ENCODE measurements at regions of chr19 and their contacts with region 1.

Region 1: GRCh38 chr19:6632002-6632621 is 37.8 kb downstream of the TNFSF14 start:
- DNase-seq: peak; percentile 29 to 88 (median 78)
- ATAC-seq: peak; percentile 90
- H3K4me3 ChIP-seq: no peak overlapping the region
- H3K4me3 Mint-ChIP-seq: no peak overlapping the region
- H3K27ac ChIP-seq: no peak overlapping the region
- H3K27ac Mint-ChIP-seq: peak overlapping the region in 3 of 9 donors; percentile 7 to 20 (median 13)
- H3K4me1 ChIP-seq: peaks cover 0 to 5% of the 10 kb centered on the region in 2 donors
- H3K4me1 Mint-ChIP-seq: peaks cover 4 to 20% (median 9%) of the 10 kb centered on the region in 7 donors
- H3K27me3 ChIP-seq: no peaks in the 10 kb centered on the region
- H3K27me3 Mint-ChIP-seq: peaks cover 4 to 7% (median 5%) of the 10 kb centered on the region in 5 donors

Region 2: GRCh38 chr19:6056801-6057650 is 575.1 kb before region 1 on chr19:
- CTCF ChIA-PET with region 1: no interaction called
- POLR2A ChIA-PET with region 1: no interaction called
- intact Hi-C with region 1: no loop called
- DNase-seq: no peak
- ATAC-seq: peak; percentile 80
- H3K4me3 ChIP-seq: no peak overlapping the region
- H3K4me3 Mint-ChIP-seq: no peak overlapping the region
- H3K27ac ChIP-seq: no peak overlapping the region
- H3K27ac Mint-ChIP-seq: peak overlapping the region in 1 of 9 donors; percentile 57
- H3K4me1 ChIP-seq: peaks cover 0 to under 1% of the 10 kb centered on the region in 2 donors
- H3K4me1 Mint-ChIP-seq: peaks cover 15 to 33% (median 19%) of the 10 kb centered on the region in 7 donors
- H3K27me3 ChIP-seq: no peaks in the 10 kb centered on the region
- H3K27me3 Mint-ChIP-seq: peaks cover 0 to 11% (median 0%) of the 10 kb centered on the region in 5 donors

Region 3: DNA sequence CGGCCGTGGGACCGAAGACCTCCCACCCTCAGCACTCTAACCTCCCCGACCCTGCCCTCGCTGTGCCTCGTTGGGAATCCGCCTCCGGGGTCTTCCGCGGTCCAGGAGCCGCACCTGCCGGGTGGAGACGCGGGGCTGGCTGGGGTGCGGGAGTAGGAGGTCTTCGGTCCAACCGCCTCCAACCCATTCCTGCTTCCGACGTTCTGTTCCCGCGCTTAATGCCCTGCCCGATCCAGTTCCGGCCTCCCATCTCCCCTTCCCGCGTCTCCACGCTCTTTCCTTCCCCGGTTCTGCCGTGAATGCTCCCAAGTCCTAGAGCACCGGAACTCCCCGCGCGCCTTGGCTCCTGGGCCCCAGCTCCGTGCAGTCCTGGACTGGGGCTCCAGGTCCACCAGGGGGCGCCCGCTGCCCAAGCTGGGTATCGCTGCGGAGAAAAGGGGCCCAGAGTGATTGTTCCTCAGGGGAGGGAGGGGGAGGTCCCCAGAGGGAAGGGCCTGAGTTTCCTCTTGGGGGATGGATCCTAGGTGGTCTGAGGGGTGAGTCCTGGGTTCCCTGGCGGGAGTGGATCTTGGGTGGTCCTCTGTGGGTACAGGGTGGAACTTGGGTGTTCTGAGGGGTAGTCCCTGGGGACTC is 115.3 kb before region 1 on chr19:
- CTCF ChIA-PET with region 1: interaction called, 4 read pairs
- POLR2A ChIA-PET with region 1: no interaction called
- intact Hi-C with region 1: loop called (anchors 1 kb)
- DNase-seq: peak; percentile 72 to 96 (median 85)
- ATAC-seq: peak; percentile 91
- H3K4me3 ChIP-seq: peak overlapping the region; percentile 68
- H3K4me3 Mint-ChIP-seq: peak overlapping the region; percentile 81 to 100 (median 96)
- H3K27ac ChIP-seq: peak overlapping the region; percentile 49
- H3K27ac Mint-ChIP-seq: peak overlapping the region; percentile 22 to 90 (median 69)
- H3K4me1 ChIP-seq: peaks cover 8 to 20% of the 10 kb centered on the region in 2 donors
- H3K4me1 Mint-ChIP-seq: peaks cover 22 to 35% (median 33%) of the 10 kb centered on the region in 7 donors
- H3K27me3 ChIP-seq: no peaks in the 10 kb centered on the region
- H3K27me3 Mint-ChIP-seq: peaks cover 0 to 2% (median 0%) of the 10 kb centered on the region in 5 donors

Region 4: DNA sequence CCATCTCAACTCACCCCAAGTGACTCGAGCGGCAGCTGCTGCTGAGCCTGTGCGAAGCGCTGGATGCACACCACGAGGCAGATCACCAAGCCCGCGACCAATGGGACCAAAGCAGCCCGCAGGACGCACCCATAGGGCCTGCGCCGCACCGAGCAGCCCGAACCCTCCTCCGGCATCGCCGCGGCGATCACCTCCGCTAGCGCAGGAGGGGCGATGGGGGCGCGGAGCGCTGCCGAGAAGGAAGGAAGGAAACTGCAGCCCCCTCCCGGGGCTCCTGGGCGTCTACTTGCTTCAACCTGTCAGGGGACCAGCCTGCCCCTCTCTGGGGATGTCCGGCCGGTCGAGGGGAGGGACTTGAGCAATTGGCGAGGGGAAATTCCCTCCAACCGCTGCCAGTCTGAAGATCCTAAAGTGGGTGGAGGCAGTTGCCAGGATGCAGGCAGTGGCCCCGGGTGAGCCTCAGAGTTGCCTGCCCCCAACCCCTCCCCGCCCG is 41.2 kb before region 1 on chr19 and contains the start of gene CD70:
- CTCF ChIA-PET with region 1: no interaction called
- POLR2A ChIA-PET with region 1: no interaction called
- intact Hi-C with region 1: no loop called
- DNase-seq: peak in 6 of 9 donors; percentile 10 to 68 (median 17)
- ATAC-seq: peak; percentile 74
- H3K4me3 ChIP-seq: peak within 1 kb of the TSS; percentile 56
- H3K4me3 Mint-ChIP-seq: peak within 1 kb of the TSS; percentile 58 to 93 (median 82)
- H3K27ac ChIP-seq: no peak within 1 kb of the TSS
- H3K27ac Mint-ChIP-seq: peak within 1 kb of the TSS in 2 of 9 donors; percentile 1 to 87
- H3K4me1 ChIP-seq: peaks cover 30 to 46% of the 10 kb centered on the region in 2 donors
- H3K4me1 Mint-ChIP-seq: peaks cover 40 to 61% (median 47%) of the 10 kb centered on the region in 7 donors
- H3K27me3 ChIP-seq: peaks cover 0 to 20% of the 10 kb centered on the region in 2 donors
- H3K27me3 Mint-ChIP-seq: peaks cover 46 to 71% (median 66%) of the 10 kb centered on the region in 5 donors
- total RNA-seq, gene CD70: 1.2 to 39.6 TPM in 2 of 5 experiments, not detected in the others

Region 5: DNA sequence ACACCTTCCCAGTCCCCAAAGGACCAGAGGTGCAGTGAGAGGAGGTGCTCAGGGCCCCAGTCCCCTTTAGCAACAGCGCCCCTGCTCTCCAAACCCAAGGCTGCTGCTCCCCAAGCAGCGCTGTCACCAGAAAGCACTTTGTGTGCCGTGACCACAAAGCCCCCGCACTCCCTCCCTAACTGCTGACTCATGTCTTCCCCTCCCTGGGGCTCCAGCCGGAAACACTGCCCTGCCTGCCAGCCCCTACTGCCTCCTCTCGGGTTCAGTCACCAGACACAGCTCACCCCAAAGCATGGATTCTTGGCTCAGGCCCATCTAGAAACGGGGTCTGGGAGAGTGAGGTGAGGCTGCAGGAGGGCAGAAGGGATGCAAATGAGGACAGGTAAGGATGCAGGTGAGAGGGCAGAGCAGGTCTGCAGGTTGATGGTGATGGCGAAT is 42.8 kb after region 1 on chr19:
- CTCF ChIA-PET with region 1: no interaction called
- POLR2A ChIA-PET with region 1: no interaction called
- intact Hi-C with region 1: loop called (anchors 2 kb)
- DNase-seq: peak; percentile 21 to 90 (median 54)
- ATAC-seq: peak; percentile 77
- H3K4me3 ChIP-seq: peak overlapping the region; percentile 48
- H3K4me3 Mint-ChIP-seq: peak overlapping the region in 4 of 10 donors; percentile 4 to 82 (median 32)
- H3K27ac ChIP-seq: no peak overlapping the region
- H3K27ac Mint-ChIP-seq: peak overlapping the region in 2 of 9 donors; percentile 46 to 88
- H3K4me1 ChIP-seq: peaks cover 22 to 34% of the 10 kb centered on the region in 2 donors
- H3K4me1 Mint-ChIP-seq: peaks cover 27 to 65% (median 41%) of the 10 kb centered on the region in 7 donors
- H3K27me3 ChIP-seq: no peaks in the 10 kb centered on the region
- H3K27me3 Mint-ChIP-seq: no peaks in the 10 kb centered on the region

Region 6: DNA sequence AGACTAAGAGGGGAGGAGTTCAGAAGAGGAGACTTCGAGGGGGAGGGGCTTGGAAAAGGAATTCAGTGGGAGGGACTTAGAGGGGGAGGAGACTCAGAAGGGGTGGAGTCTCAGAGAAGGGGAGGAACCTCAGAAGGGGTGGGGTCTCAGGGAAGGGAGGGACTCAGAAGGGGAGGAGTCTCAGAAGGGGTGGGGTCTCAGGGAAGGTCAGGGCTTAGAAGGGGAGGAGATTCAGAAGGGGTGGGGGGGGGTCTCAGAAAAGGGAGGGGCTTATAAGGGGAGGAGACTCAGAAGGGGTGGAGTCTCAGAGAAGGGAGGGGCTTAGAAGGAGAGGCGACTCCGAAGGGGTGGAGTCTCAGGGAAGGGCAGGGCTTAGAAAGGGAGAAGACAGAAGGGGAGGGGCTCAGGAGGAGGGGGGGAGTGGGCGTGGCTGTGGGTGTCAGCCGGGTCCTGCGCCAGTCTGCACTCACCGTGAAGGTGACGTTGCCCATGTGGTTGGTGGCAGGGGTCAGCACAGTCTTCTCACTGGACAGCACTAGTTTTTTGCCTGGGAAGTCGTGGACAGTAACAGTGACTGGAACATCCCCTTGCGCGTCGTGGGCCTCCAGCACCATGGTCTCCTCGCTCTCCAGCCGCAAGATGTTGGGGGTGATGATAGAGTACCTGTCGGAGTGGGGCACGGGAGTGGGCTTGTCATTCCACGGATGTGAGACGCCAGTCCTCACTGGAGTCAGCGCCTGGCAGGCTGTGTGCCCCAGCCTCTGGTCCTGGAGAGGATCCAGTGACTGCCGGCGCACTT is 86.8 kb after region 1 on chr19:
- CTCF ChIA-PET with region 1: no interaction called
- POLR2A ChIA-PET with region 1: no interaction called
- intact Hi-C with region 1: loop called in 1 of 2 experiments (anchors 5 kb)
- DNase-seq: peak in 4 of 9 donors; percentile 10 to 38 (median 31)
- ATAC-seq: peak; percentile 73
- H3K4me3 ChIP-seq: no peak overlapping the region
- H3K4me3 Mint-ChIP-seq: no peak overlapping the region
- H3K27ac ChIP-seq: no peak overlapping the region
- H3K27ac Mint-ChIP-seq: peak overlapping the region in 1 of 9 donors; percentile 4
- H3K4me1 ChIP-seq: no peaks in the 10 kb centered on the region
- H3K4me1 Mint-ChIP-seq: peaks cover 10 to 30% (median 21%) of the 10 kb centered on the region in 7 donors
- H3K27me3 ChIP-seq: no peaks in the 10 kb centered on the region
- H3K27me3 Mint-ChIP-seq: peaks cover 0 to 4% (median 0%) of the 10 kb centered on the region in 5 donors

Region 7: DNA sequence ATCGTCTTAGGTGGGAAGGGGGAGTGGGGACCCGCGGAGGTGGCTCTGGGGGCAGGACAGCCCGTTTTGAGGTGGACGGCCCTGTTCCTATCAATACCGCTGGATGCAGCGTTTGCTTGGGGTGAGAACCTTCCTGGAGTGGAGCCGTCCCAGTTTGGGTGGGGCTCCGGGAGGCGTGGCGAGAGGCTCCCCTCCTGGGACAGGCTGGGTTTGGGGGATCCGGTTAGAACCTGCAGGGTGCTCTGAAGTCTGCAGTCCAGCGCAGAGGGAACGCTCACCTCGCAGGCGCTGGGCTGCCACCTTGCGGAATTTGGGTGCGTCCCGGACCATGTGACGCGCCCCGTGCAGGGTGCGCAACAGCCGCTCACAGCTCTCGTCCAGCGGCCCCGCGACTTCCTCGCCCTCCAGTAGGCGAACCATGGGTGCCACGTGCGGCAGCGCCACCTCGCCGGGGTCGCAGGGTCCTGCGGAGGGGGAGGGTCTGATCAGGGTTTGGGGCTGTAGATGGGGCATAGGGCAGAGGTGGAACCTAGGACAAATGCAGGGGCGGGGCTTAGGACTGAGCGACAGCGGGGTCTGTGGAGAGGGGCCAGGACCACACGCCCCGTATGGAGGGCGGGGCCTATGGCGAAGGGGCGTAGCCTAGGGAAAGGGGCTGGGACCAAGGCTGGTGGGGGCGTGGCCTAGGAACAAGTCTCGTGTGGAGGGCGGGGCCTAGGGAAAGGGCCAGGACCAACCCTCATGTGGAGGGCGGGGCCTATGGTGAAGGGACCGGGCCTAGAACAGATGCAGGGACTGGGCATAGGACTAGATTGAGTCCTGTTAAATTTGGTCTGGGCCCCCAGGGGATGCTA is 121.3 kb after region 1 on chr19:
- CTCF ChIA-PET with region 1: no interaction called
- POLR2A ChIA-PET with region 1: no interaction called
- intact Hi-C with region 1: loop called in 1 of 2 experiments (anchors 1 kb)
- DNase-seq: peak; percentile 64 to 86 (median 75)
- ATAC-seq: peak; percentile 96
- H3K4me3 ChIP-seq: peak overlapping the region; percentile 64
- H3K4me3 Mint-ChIP-seq: peak overlapping the region; percentile 64 to 89 (median 74)
- H3K27ac ChIP-seq: peak overlapping the region; percentile 48
- H3K27ac Mint-ChIP-seq: peak overlapping the region; percentile 41 to 93 (median 88)
- H3K4me1 ChIP-seq: no peaks in the 10 kb centered on the region
- H3K4me1 Mint-ChIP-seq: peaks cover 5 to 14% (median 11%) of the 10 kb centered on the region in 7 donors
- H3K27me3 ChIP-seq: no peaks in the 10 kb centered on the region
- H3K27me3 Mint-ChIP-seq: no peaks in the 10 kb centered on the region

Region 8: GRCh38 chr19:6828698-6829562 is 196.8 kb after region 1 on chr19:
- CTCF ChIA-PET with region 1: interaction called, 12 read pairs
- POLR2A ChIA-PET with region 1: no interaction called
- intact Hi-C with region 1: no loop called
- DNase-seq: peak in 6 of 9 donors; percentile 13 to 38 (median 16)
- ATAC-seq: peak; percentile 79
- H3K4me3 ChIP-seq: no peak overlapping the region
- H3K4me3 Mint-ChIP-seq: no peak overlapping the region
- H3K27ac ChIP-seq: no peak overlapping the region
- H3K27ac Mint-ChIP-seq: peak overlapping the region; percentile 54 to 92 (median 81)
- H3K4me1 ChIP-seq: no peaks in the 10 kb centered on the region
- H3K4me1 Mint-ChIP-seq: peaks cover 4 to 19% (median 9%) of the 10 kb centered on the region in 7 donors
- H3K27me3 ChIP-seq: no peaks in the 10 kb centered on the region
- H3K27me3 Mint-ChIP-seq: no peaks in the 10 kb centered on the region

Region 9: GRCh38 chr19:7004313-7004931 is 372.3 kb after region 1 on chr19:
- CTCF ChIA-PET with region 1: interaction called, 3 read pairs
- POLR2A ChIA-PET with region 1: no interaction called
- intact Hi-C with region 1: loop called in 1 of 2 experiments (anchors 1 kb)
- DNase-seq: peak in 5 of 9 donors; percentile 14 to 55 (median 54)
- ATAC-seq: peak; percentile 67
- H3K4me3 ChIP-seq: no peak overlapping the region
- H3K4me3 Mint-ChIP-seq: peak overlapping the region in 4 of 10 donors; percentile 26 to 45 (median 28)
- H3K27ac ChIP-seq: no peak overlapping the region
- H3K27ac Mint-ChIP-seq: no peak overlapping the region
- H3K4me1 ChIP-seq: peaks cover 11 to 18% of the 10 kb centered on the region in 2 donors
- H3K4me1 Mint-ChIP-seq: peaks cover 20 to 65% (median 40%) of the 10 kb centered on the region in 7 donors
- H3K27me3 ChIP-seq: no peaks in the 10 kb centered on the region
- H3K27me3 Mint-ChIP-seq: peaks cover 0 to 2% (median 0%) of the 10 kb centered on the region in 5 donors